Dendritic cell treated with granulocyte-macrophage colony-stimulating factor and Interleukin-4, amounts not matched to agents 40 ng/mL and 50 ng/mL, for 4 days (primary cell): ENCODE measurements at regions of chr6 and their contacts with region 1.

Region 1: GRCh38 chr6:18179770-18180356 is 24.6 kb downstream of the KDM1B start:
- H3K4me3 Mint-ChIP-seq: no peak overlapping the region
- H3K27ac Mint-ChIP-seq: peak overlapping the region; percentile 91
- H3K4me1 Mint-ChIP-seq: peaks cover 67% of the 10 kb centered on the region
- H3K27me3 Mint-ChIP-seq: no peaks in the 10 kb centered on the region

Region 2: GRCh38 chr6:18400831-18401446 is 221.1 kb after region 1 on chr6:
- intact Hi-C with region 1: loop called (anchors 5 kb)
- H3K4me3 Mint-ChIP-seq: peak overlapping the region; percentile 34
- H3K27ac Mint-ChIP-seq: peak overlapping the region; percentile 94
- H3K4me1 Mint-ChIP-seq: peaks cover 80% of the 10 kb centered on the region
- H3K27me3 Mint-ChIP-seq: no peaks in the 10 kb centered on the region